IMR-90 (cell line): ENCODE measurements at regions of chr2 and their contacts with region 1.

Region 1: DNA sequence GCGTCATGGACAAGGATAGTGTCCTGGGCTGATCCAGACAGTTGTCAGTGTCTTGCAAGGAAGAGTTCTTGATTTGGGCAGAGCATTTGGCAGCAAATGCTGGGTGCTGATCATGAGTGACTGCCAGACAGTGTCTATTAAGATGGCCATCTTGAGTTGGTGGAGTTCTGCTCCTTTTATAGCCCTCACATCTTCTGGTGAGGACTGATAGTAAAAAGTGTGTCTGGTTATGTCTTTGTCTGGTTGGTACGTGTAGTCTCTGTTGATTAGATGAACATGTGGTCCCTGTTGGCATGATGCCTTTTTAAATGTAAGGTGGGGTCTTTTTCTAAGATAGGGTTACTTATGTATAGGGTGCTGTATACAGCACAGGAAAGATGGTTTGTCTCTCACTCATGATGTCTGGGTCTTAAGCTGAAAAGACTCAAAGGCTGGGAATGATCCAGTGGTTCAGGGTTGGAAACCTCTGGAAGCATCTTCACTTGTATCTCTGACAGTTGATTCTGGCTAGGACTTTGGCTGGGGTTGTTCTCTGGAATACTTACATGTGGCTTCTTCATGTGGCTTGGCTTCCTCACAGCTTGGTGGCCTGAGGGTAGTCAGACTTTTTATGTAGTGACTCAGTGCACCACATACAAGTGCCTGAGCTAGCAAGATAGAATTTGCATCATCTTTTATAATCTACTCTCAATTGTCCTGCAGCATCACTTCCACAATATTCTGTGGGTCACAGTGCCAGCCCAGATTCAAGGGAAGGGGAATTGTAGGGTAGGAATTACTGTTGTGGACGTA is 11.8 kb downstream of the MTX2 start:
- DNase-seq: peak; percentile 61
- ATAC-seq: no peak
- H3K4me3 ChIP-seq: no peak overlapping the region
- H3K27ac ChIP-seq: no peak overlapping the region
- H3K4me1 ChIP-seq: no peaks in the 10 kb centered on the region
- H3K27me3 ChIP-seq: no peaks in the 10 kb centered on the region
- CTCF ChIP-seq: no peak
- POLR2A ChIP-seq: no peak
- RAD21 ChIP-seq: no peak

Region 2: GRCh38 chr2:176227874-176228273 is 53.2 kb before region 1 on chr2:
- CTCF ChIA-PET with region 1: no interaction called
- POLR2A ChIA-PET with region 1: no interaction called
- dilution Hi-C with region 1: no loop called
- in situ Hi-C with region 1: no loop called
- intact Hi-C with region 1: loop called (anchors 10 kb)
- DNase-seq: no peak
- ATAC-seq: no peak
- H3K4me3 ChIP-seq: no peak overlapping the region
- H3K27ac ChIP-seq: no peak overlapping the region
- H3K4me1 ChIP-seq: no peaks in the 10 kb centered on the region
- H3K27me3 ChIP-seq: no peaks in the 10 kb centered on the region
- CTCF ChIP-seq: no peak
- POLR2A ChIP-seq: no peak
- RAD21 ChIP-seq: no peak

Region 3: GRCh38 chr2:176518823-176519222 is 237.8 kb after region 1 on chr2:
- CTCF ChIA-PET with region 1: no interaction called
- POLR2A ChIA-PET with region 1: no interaction called
- dilution Hi-C with region 1: no loop called
- in situ Hi-C with region 1: no loop called
- intact Hi-C with region 1: no loop called
- DNase-seq: no peak
- ATAC-seq: no peak
- H3K4me3 ChIP-seq: no peak overlapping the region
- H3K27ac ChIP-seq: no peak overlapping the region
- H3K4me1 ChIP-seq: no peaks in the 10 kb centered on the region
- H3K27me3 ChIP-seq: peaks cover 2% of the 10 kb centered on the region; the same call in 1 of the 2 replicates
- CTCF ChIP-seq: no peak
- POLR2A ChIP-seq: no peak
- RAD21 ChIP-seq: no peak

Region 4: DNA sequence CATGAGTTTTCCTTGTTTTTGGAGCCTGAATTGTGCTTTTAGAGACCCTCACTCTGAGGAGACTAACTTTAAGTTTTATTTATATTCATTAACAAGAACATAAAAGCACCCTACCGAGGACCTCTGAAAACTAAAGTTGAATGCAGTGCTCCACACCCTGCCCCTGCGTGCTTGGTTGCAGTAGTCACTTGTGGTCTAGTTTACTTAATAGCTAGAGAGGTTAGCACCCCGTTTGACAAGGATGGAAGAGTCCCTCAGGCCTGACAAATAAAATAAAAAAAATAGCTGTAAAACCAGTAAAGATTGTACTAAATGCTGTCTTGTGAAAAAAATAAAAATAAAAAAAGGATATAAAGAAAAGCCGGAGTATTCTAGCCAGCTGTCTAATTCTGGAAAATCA is 383.4 kb after region 1 on chr2:
- CTCF ChIA-PET with region 1: no interaction called
- POLR2A ChIA-PET with region 1: no interaction called
- dilution Hi-C with region 1: no loop called
- in situ Hi-C with region 1: no loop called
- intact Hi-C with region 1: no loop called
- DNase-seq: no peak
- ATAC-seq: no peak
- H3K4me3 ChIP-seq: no peak overlapping the region
- H3K27ac ChIP-seq: no peak overlapping the region
- H3K4me1 ChIP-seq: no peaks in the 10 kb centered on the region
- H3K27me3 ChIP-seq: peaks cover 4% of the 10 kb centered on the region; the same call in 1 of the 2 replicates
- CTCF ChIP-seq: no peak
- POLR2A ChIP-seq: no peak
- RAD21 ChIP-seq: no peak